HEK293T (cell line): ENCODE measurements at regions of chr22 and their contacts with region 1.

Region 1: DNA sequence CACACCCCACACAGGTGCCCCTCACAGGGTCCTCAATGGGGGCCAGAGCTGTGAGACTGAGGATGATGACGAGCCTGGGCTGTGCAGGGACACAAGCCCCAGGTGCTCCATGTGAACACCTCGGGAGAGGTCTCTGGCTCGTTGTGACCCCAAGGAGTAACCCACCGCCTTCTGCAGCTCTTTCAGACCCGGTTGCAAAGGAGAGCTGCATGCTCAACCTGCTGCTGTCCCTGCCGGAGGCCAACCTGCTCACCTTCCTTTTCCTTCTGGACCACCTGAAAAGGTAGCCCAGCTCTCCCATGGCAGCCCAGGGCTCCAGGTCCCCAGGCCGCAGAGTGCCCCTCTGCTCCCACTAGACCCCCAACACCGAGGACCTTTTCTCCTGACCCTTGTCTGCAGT is 133.5 kb downstream of the BCR start:
- DNase-seq: no peak

Region 2: GRCh38 chr22:23385291-23386244 is 71.8 kb after region 1 on chr22:
- CTCF ChIA-PET with region 1: interaction called, 10 read pairs
- POLR2A ChIA-PET with region 1: no interaction called
- DNase-seq: peak; percentile 96